Pancreas (tissue), 10 donors: ENCODE measurements at regions of chr5 and their contacts with region 1.

Region 1: DNA sequence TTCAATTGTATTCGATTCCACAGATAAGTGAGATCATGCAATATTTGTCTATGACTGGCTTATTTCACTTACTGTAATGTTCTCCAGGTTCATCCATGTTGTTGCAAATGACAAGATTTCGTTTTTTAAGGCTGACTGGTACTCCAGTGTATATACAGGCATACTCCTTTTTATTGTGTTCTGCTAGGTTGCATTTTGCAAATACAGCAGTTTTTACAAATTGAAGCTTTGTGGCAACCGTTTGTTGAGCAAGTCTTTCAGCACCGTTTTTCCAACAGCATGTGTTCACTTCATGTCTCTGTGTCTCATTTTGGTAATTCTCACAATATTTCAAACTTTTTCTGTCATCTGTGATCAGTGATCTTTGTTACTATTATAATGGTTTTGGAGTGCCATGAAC is 82.7 kb downstream of the DMXL1 start:
- DNase-seq: no peak
- ATAC-seq: no peak
- H3K4me3 ChIP-seq: no peak overlapping the region
- H3K27ac ChIP-seq: no peak overlapping the region
- H3K4me1 ChIP-seq: no peaks in the 10 kb centered on the region
- H3K27me3 ChIP-seq: no peaks in the 10 kb centered on the region
- CTCF ChIP-seq: no peak

Region 2: GRCh38 chr5:119031905-119032304 is 121.7 kb before region 1 on chr5:
- intact Hi-C with region 1: no loop called
- DNase-seq: no peak
- ATAC-seq: peak in 1 of 4 donors; percentile 52
- H3K4me3 ChIP-seq: no peak overlapping the region
- H3K27ac ChIP-seq: no peak overlapping the region
- H3K4me1 ChIP-seq: peaks cover under 1 to 6% (median 3%) of the 10 kb centered on the region in 3 donors
- H3K27me3 ChIP-seq: no peaks in the 10 kb centered on the region
- CTCF ChIP-seq: no peak

Region 3: DNA sequence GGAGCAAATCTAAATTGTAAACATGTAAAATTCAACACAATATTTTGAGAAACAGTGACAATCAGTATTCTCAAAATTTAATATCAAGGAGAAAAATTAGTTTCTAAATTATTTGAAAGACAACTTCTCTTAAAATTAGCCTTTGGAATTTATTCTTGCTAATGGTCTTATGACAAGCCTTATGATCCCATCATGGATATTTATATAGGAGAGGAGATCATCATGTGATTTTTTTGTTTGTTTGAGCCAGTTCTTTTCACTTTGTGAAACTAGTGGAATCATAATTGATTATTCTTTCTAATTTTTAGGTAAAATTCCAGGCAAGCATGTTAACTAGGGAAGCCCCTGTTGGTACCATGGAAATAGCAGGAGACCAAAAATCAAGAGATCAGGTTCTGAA is 58.0 kb before region 1 on chr5:
- intact Hi-C with region 1: no loop called
- DNase-seq: no peak
- ATAC-seq: no peak
- H3K4me3 ChIP-seq: no peak overlapping the region
- H3K27ac ChIP-seq: no peak overlapping the region
- H3K4me1 ChIP-seq: no peaks in the 10 kb centered on the region
- H3K27me3 ChIP-seq: no peaks in the 10 kb centered on the region
- CTCF ChIP-seq: no peak

Region 4: GRCh38 chr5:119411935-119412602 is 258.4 kb after region 1 on chr5:
- intact Hi-C with region 1: loop called in 1 of 3 experiments (anchors 10 kb)
- DNase-seq: peak in 4 of 6 donors; percentile 43 to 69 (median 60)
- ATAC-seq: peak; percentile 96 to 98 (median 98)
- H3K4me3 ChIP-seq: peak overlapping the region in 3 of 4 donors; percentile 4 to 49 (median 42)
- H3K27ac ChIP-seq: peak overlapping the region in 1 of 4 donors; percentile 63
- H3K4me1 ChIP-seq: peaks cover 0 to 3% (median 0%) of the 10 kb centered on the region in 3 donors
- H3K27me3 ChIP-seq: no peaks in the 10 kb centered on the region
- CTCF ChIP-seq: peak; percentile 83 to 90 (median 89)